ENCODE measurements at regions of chr1 and their contacts with region 1.

Region 1: DNA sequence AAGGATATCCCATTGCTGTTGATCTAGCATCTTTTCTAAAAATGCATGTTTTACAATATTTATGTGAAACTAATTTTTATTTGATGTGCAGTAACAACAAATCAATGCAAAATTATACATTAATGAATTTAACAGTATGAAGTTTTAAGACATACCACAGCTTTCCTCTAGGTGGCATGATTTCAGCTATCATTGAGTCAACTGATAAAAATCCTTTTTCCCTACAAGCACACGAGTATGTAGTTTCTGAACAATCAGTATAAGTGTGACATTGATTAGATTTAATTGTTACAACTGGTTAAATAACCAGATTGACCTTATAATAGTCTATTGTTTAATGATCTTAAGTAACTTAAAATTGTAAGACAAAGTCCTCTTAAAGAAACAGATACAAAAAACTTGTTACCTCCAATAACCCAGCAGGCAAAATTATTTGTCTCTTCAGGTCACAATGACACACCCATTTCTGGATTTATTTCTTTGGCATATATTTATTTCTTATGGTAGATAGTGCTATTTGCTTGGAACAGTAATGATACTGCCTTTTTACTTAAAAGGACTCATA is 5.8 kb upstream of the TGFB2 start:
- DNase-seq: no peak
- ATAC-seq: no peak
- H3K4me3 ChIP-seq: no peak overlapping the region
- H3K27ac ChIP-seq: no peak overlapping the region
- H3K4me1 ChIP-seq: peaks cover 0 to 3% of the 10 kb centered on the region in 2 donors
- H3K27me3 ChIP-seq: no peaks in the 10 kb centered on the region
- CTCF ChIP-seq: peak; percentile 56 to 77 (median 71)
- POLR2A ChIP-seq: no peak

Region 2: GRCh38 chr1:218397752-218398339 is 58.5 kb after region 1 on chr1:
- in situ Hi-C with region 1: no loop called
- intact Hi-C with region 1: no loop called
- DNase-seq: no peak
- ATAC-seq: no peak
- H3K4me3 ChIP-seq: no peak overlapping the region
- H3K27ac ChIP-seq: no peak overlapping the region
- H3K4me1 ChIP-seq: peaks cover 15 to 32% of the 10 kb centered on the region in 2 donors
- H3K27me3 ChIP-seq: no peaks in the 10 kb centered on the region
- CTCF ChIP-seq: no peak
- POLR2A ChIP-seq: no peak

Region 3: GRCh38 chr1:218516526-218516925 is 177.2 kb after region 1 on chr1:
- in situ Hi-C with region 1: loop called in 3 of 4 experiments (anchors 5 to 10 kb)
- intact Hi-C with region 1: loop called (anchors 1 kb)
- DNase-seq: no peak
- ATAC-seq: no peak
- H3K4me3 ChIP-seq: no peak overlapping the region
- H3K27ac ChIP-seq: no peak overlapping the region
- H3K4me1 ChIP-seq: peaks cover 0 to 5% of the 10 kb centered on the region in 2 donors
- H3K27me3 ChIP-seq: no peaks in the 10 kb centered on the region
- CTCF ChIP-seq: no peak
- POLR2A ChIP-seq: no peak

Region 4: GRCh38 chr1:218521375-218522169 is 182.2 kb after region 1 on chr1:
- in situ Hi-C with region 1: loop called (anchors 5 to 10 kb)
- intact Hi-C with region 1: loop called (anchors 1 kb)
- DNase-seq: peak; percentile 21 to 56
- ATAC-seq: peak; percentile 39 to 94
- H3K4me3 ChIP-seq: no peak overlapping the region
- H3K27ac ChIP-seq: no peak overlapping the region
- H3K4me1 ChIP-seq: peaks cover 5 to 18% of the 10 kb centered on the region in 2 donors
- H3K27me3 ChIP-seq: no peaks in the 10 kb centered on the region
- CTCF ChIP-seq: peak; percentile 63 to 80 (median 76)
- POLR2A ChIP-seq: no peak

Region 5: DNA sequence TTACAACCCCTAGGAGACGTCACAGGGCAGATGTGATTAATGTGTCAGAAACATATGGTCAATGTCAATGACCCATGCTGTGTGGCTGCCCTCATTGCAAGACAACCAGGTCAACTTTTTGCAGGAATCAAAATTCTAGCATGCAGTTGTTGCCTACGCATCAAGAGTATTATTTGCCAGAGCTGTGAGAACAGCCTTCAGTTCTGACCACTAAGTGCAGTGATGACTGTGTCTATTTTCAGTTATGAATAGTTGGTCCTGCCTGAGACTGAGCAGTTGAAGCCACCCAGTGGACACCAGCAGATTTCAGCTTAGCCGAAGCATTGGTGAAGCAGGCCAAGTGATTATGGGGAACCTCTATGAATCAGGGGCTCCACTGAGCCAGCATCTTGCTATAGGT is 881.6 kb after region 1 on chr1:
- in situ Hi-C with region 1: no loop called
- intact Hi-C with region 1: no loop called
- DNase-seq: no peak
- ATAC-seq: no peak
- H3K4me3 ChIP-seq: no peak overlapping the region
- H3K27ac ChIP-seq: no peak overlapping the region
- H3K4me1 ChIP-seq: no peaks in the 10 kb centered on the region
- H3K27me3 ChIP-seq: no peaks in the 10 kb centered on the region
- CTCF ChIP-seq: no peak
- POLR2A ChIP-seq: no peak

Region 6: DNA sequence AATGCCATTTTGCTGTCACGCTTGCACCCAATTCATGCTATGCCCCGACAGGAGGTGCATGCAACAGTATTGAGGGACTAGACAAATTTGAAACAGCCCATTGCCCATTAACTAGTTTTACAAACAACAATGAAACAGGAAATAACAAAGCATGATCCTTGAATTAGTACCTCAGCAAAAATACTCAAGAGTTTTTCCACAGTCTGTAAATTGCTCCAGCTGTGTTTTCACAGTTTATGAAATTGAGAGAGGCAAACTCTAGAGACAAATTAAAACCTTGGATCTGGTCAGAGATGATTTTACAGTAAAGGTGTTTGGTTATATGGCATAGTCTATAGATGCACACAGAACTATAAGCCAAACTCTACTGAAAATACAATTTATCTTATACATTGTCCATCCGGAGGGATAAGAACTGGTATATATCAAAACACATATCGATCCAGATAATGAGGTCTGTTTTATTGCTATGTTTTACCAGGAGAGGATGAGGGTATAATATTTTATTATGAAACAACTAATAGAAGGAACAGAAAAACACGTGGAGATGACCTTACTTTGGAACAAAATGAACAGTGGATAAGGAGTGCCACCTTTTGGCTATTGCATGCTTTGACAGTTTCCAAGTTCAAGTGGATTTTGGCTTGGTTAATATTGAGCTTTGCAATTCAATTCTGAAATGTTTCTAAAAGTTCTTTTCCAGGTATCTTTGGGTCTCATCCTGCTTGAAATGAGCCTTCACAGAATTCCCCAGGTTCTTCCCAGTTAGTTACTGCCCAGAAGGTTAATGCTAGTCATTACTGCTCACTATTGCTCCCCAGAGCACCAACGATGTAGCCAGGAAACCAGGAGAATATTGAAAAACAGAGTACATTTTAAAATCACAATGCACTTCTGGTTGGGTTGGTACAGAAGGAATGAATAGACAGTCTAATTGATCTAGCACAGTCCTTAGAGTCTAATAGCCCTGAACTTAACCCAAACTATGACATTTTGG is 1227.9 kb after region 1 on chr1:
- in situ Hi-C with region 1: loop called in 2 of 4 experiments (anchors 10 kb)
- intact Hi-C with region 1: loop called (anchors 5 kb)
- DNase-seq: no peak
- ATAC-seq: peak; percentile 47 to 60
- H3K4me3 ChIP-seq: no peak overlapping the region
- H3K27ac ChIP-seq: no peak overlapping the region
- H3K4me1 ChIP-seq: no peaks in the 10 kb centered on the region
- H3K27me3 ChIP-seq: no peaks in the 10 kb centered on the region
- CTCF ChIP-seq: peak in 2 of 5 experiments; percentile 23 to 32
- POLR2A ChIP-seq: no peak

Measured in gastrocnemius medialis (tissue), 4 donors.